Right cardiac atrium (tissue), 5 donors: ENCODE measurements at regions of chr6 and their contacts with region 1.

Region 1: DNA sequence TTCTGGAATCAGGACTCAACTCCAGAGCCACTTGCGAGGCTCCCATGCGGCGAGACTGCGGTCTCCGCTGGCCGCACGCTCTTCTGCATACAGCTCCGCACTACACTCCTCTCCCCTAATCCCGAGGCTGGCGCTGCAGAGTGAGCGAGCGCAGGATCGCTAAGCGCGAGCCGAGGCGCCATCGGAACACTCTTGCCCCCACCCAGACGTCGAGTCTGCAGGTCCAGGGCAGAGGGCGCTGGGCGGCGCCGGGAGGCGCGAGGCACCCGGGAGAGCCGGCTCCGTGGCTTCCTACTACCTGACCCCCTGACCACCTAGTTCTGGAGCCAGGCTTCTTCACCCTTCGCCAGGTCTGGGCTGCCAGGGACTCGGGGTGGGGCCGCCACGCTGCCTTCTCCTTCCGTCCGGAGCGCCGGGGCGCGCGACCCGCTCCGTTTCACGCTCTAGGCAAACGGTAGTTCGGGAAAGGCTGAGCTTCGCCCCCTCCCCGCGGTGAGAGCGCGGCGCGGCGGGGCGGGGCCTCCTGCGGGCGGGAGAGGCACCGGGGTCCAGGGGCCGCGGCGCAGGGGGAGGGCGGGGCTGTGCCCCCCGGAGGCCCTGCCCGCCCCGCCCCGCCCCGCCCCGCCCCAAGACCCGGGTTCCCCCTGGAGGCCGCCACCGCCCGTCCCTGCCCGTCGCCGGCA is 5.4 kb upstream of the TUBB2A start:
- DNase-seq: peak; percentile 75 to 90 (median 90)
- ATAC-seq: peak; percentile 83 to 88
- H3K4me3 ChIP-seq: peak overlapping the region; percentile 51
- H3K27ac ChIP-seq: peak overlapping the region; percentile 78
- H3K4me1 ChIP-seq: no peaks in the 10 kb centered on the region
- H3K27me3 ChIP-seq: no peaks in the 10 kb centered on the region

Region 2: GRCh38 chr6:3220366-3220765 is 57.7 kb after region 1 on chr6:
- intact Hi-C with region 1: no loop called
- DNase-seq: no peak
- ATAC-seq: no peak
- H3K4me3 ChIP-seq: no peak overlapping the region
- H3K27ac ChIP-seq: no peak overlapping the region
- H3K4me1 ChIP-seq: no peaks in the 10 kb centered on the region
- H3K27me3 ChIP-seq: no peaks in the 10 kb centered on the region

Region 3: DNA sequence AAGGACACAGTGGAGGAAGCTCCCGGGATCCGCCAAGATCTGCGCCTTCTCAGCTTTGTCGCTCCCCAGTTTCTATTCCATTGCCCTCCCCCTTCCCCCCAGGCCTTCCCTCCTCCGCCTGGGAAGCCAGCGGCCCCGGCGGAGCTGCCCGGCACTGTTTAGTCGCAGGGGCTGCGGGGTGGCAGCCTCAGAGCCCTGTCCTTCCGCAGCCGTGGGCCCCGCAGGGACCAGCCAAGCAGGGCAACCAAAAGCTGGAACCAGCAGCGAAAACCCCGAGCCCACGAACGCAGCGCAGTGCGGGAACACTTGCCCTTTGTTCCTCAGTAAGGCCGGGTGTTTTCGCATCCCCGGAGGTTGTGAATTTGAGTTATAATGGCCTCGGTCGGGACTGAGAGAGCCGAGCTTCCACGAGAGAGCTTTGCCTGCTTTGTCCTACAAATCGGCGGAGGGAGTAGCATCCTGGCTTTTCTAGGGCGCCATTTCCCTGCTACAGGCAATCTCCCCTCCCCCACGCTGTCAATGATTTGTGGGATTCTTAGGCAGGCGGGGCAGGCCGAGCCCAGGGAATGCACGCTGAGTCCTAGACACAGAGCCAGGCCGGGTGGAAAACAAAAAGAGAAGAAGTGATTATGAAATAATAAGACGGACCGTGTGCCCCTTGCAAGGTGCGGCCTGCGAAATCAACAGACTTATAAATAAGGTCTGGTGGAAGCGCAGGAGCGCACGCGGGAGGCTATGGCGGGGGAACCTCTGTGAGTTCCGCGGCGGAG is 68.7 kb after region 1 on chr6:
- intact Hi-C with region 1: loop called in 1 of 4 experiments (anchors 5 kb)
- DNase-seq: peak; percentile 75 to 85 (median 84)
- ATAC-seq: peak; percentile 81 to 82
- H3K4me3 ChIP-seq: peak overlapping the region; percentile 83
- H3K27ac ChIP-seq: peak overlapping the region; percentile 40
- H3K4me1 ChIP-seq: peaks cover 6% of the 10 kb centered on the region
- H3K27me3 ChIP-seq: no peaks in the 10 kb centered on the region